ENCODE measurements at regions of chr5 and their contacts with region 1.

Region 1: GRCh38 chr5:1199649-1200494 is 1.5 kb upstream of the SLC6A19 start:
- DNase-seq: peak in 1 of 14 experiments; percentile 17
- ATAC-seq: no peak
- H3K4me3 ChIP-seq: no peak overlapping the region
- H3K4me3 Mint-ChIP-seq: no peak overlapping the region
- H3K27ac ChIP-seq: no peak overlapping the region
- H3K27ac Mint-ChIP-seq: no peak overlapping the region
- H3K4me1 ChIP-seq: no peaks in the 10 kb centered on the region
- H3K4me1 Mint-ChIP-seq: no peaks in the 10 kb centered on the region
- H3K27me3 ChIP-seq: peaks cover 0 to 3% of the 10 kb centered on the region in 2 experiments
- H3K27me3 Mint-ChIP-seq: peaks cover 7% of the 10 kb centered on the region
- CTCF ChIP-seq: no peak

Region 2: GRCh38 chr5:1227669-1228068 is 27.8 kb after region 1 on chr5:
- CTCF ChIA-PET with region 1: no interaction called
- POLR2A ChIA-PET with region 1: no interaction called
- intact Hi-C with region 1: no loop called
- DNase-seq: no peak
- ATAC-seq: no peak
- H3K4me3 ChIP-seq: no peak overlapping the region
- H3K4me3 Mint-ChIP-seq: no peak overlapping the region
- H3K27ac ChIP-seq: no peak overlapping the region
- H3K27ac Mint-ChIP-seq: no peak overlapping the region
- H3K4me1 ChIP-seq: no peaks in the 10 kb centered on the region
- H3K4me1 Mint-ChIP-seq: peaks cover 11% of the 10 kb centered on the region
- H3K27me3 ChIP-seq: peaks cover 0 to 2% of the 10 kb centered on the region in 2 experiments
- H3K27me3 Mint-ChIP-seq: peaks cover 6% of the 10 kb centered on the region
- CTCF ChIP-seq: no peak

Region 3: DNA sequence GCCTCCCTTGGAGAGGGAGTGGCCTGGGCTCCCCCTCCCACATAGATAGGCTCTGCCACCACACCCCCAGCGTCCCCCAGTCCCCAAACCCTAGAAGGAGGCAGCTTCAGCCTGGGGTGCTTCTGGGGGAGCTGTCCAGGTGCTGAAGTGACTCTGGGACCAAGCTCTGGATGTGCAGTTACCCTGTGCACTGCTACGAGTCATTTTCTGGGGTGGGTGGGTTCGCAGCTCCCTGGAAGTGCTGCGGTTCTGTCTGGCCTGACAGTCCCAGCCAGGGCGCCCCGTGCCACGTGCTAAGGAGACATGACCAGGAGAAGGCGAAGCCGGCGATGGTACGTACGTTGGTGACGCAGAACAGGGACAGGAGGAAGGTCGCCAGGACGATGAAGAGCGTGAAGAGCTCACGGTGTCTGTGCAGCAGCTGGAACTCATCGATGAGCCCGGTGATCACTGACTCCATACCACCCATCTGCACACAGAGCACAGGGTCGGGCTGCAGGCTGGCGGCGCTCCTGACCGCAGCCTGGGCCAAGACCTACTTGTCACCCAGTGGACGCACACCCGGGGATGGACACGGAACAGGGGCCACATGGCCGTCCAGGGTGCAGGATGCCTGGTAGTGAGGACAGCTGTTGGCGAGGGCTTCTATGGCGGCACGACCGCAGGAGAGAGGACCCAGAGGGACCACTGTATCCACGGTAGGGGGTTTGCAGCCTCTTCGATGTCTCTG is 209.7 kb after region 1 on chr5:
- CTCF ChIA-PET with region 1: no interaction called
- POLR2A ChIA-PET with region 1: no interaction called
- intact Hi-C with region 1: loop called in 1 of 2 experiments (anchors 10 kb)
- DNase-seq: peak in 3 of 14 experiments; percentile 8 to 44 (median 43)
- ATAC-seq: no peak
- H3K4me3 ChIP-seq: no peak overlapping the region
- H3K4me3 Mint-ChIP-seq: no peak overlapping the region
- H3K27ac ChIP-seq: no peak overlapping the region
- H3K27ac Mint-ChIP-seq: no peak overlapping the region
- H3K4me1 ChIP-seq: no peaks in the 10 kb centered on the region
- H3K4me1 Mint-ChIP-seq: no peaks in the 10 kb centered on the region
- H3K27me3 ChIP-seq: peaks cover 8% of the 10 kb centered on the region in 2 experiments
- H3K27me3 Mint-ChIP-seq: peaks cover 30% of the 10 kb centered on the region
- CTCF ChIP-seq: no peak

Measured in CD4-positive, alpha-beta T cell (primary cell).